ENCODE measurements at regions of chr7 and their contacts with region 1.

Region 1: GRCh38 chr7:28921822-28922221 is 36.3 kb downstream of the TRIL start:
- DNase-seq: peak; percentile 84
- H3K4me3 ChIP-seq: peak overlapping the region in 1 of 2 experiments; percentile 6; a peak in 1 of 4 replicates
- H3K27ac ChIP-seq: peak overlapping the region in 1 of 2 experiments; percentile 93; a peak in 2 of 4 replicates
- H3K4me1 ChIP-seq: peaks cover 0 to 13% of the 10 kb centered on the region in 2 experiments; a peak in 3 of 4 replicates
- H3K27me3 ChIP-seq: 0 out of 2 replicates have a peak, but pooled peaks cover 15% of the 10 kb centered on the region
- CTCF ChIP-seq: peak; percentile 97
- EP300 ChIP-seq: peak in 1 of 2 experiments; percentile 77; a peak in 2 of 4 replicates
- RAD21 ChIP-seq: peak; percentile 87

Region 2: DNA sequence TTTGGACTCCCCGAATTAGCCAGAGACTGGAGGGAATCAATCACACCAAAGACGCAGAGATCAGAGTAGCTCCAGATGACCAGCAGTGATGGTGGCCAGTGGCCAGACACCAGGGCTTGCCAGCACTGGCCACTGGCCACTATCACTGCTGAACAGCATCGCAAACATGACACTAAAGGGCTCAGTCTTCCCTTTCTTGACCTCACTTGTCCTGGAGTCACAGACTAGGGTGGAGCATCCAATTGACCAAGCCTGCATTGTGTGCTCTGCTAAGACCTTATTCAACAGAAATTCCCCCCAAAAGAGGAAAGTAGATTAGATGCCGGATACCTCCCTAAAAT is 274.8 kb before region 1 on chr7:
- CTCF ChIA-PET with region 1: no interaction called
- POLR2A ChIA-PET with region 1: no interaction called
- DNase-seq: no peak
- H3K4me3 ChIP-seq: no peak overlapping the region
- H3K27ac ChIP-seq: no peak overlapping the region
- H3K4me1 ChIP-seq: no peaks in the 10 kb centered on the region
- H3K27me3 ChIP-seq: peaks cover 4% of the 10 kb centered on the region; the same call in 1 of the 2 replicates
- CTCF ChIP-seq: no peak
- EP300 ChIP-seq: no peak
- RAD21 ChIP-seq: no peak

Region 3: DNA sequence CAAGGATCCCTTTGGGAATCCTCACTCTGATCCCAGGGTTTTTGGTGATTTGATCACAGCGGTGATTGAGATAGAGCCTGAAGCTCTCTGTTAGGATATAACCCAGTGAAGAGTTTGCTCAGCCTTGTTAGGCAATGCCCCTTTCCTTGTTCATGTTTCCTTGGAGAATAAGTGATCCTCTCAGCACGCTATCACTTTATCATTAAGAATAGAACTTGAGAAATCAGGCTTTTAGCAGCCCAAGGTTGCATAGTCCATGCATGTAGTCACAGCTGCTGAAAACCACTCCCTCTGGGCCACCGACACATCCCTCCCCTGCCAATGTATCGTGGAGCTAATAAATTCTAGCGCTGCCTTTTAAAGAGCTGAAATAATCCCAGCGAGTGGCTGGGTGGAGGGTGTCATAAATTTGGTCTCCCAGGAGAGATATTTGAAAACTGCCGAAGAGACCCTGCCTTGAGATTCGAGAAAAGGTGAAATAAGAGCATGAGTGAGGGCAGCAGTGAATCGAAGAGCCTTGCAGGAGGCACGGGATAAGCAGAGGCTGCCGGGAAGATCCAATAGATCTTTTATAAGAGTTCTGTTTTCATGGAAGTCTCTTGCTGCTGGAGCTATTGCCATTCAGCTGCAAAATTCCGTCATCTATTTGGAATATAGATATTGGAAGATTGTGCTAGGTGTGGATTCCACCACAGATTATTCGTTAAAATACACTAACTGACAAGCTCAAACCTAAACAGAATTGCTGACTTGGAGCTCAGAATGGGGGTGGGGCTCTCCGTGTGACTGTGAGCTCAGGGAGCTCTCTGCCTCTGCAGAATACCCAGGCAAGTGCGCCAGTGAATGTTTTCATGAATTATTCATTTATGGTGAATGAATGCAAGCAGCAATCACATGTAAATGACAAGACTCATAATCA is 213.5 kb before region 1 on chr7:
- CTCF ChIA-PET with region 1: no interaction called
- POLR2A ChIA-PET with region 1: no interaction called
- DNase-seq: no peak
- H3K4me3 ChIP-seq: no peak overlapping the region
- H3K27ac ChIP-seq: no peak overlapping the region
- H3K4me1 ChIP-seq: peaks cover 0 to 4% of the 10 kb centered on the region in 2 experiments; a peak in 1 of 4 replicates
- H3K27me3 ChIP-seq: no peaks in the 10 kb centered on the region
- CTCF ChIP-seq: no peak
- EP300 ChIP-seq: no peak
- RAD21 ChIP-seq: no peak

Region 4: DNA sequence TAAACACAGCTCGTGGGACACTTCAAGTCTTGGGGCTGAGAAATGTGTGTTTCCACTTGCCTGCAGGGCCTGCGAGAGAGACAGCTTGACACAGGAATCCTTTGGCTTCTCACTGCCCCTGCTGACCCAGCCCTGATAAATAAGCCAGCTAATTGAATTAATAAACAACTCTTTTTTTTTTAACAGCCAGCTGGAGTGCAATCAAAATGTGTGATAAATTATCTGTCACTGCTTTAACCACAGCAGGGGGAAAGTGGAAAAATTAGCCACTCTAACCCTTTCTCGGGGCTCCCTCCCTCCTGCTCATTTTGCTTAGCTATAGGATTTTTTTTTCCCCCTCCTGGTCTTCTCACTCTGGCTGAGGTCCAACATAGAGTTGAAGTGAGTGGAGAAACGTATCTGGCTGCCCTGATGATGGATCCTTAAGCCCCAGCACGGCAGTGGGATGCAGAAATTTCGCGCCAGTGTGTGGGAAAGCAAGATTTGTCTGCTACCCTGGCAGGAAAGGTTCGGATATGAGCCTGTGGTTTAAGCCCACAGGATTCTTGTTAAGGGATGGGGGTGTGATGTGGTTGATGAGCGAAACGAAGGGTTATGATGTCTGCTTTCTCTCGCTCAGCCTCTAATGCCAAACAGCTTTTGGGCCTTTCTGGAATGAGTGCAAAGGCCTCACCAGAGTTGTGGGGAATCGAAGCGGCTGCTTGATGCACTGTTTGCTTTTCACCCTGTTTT is 137.5 kb before region 1 on chr7:
- CTCF ChIA-PET with region 1: no interaction called
- POLR2A ChIA-PET with region 1: no interaction called
- DNase-seq: peak; percentile 49
- H3K4me3 ChIP-seq: no peak overlapping the region
- H3K27ac ChIP-seq: no peak overlapping the region
- H3K4me1 ChIP-seq: peaks cover 0 to 15% of the 10 kb centered on the region in 2 experiments; a peak in 2 of 4 replicates
- H3K27me3 ChIP-seq: no peaks in the 10 kb centered on the region
- CTCF ChIP-seq: no peak
- EP300 ChIP-seq: no peak; a peak in 1 of 4 replicates
- RAD21 ChIP-seq: no peak

Region 5: GRCh38 chr7:28800150-28800549 is 121.7 kb before region 1 on chr7:
- CTCF ChIA-PET with region 1: interaction called, 10 read pairs
- POLR2A ChIA-PET with region 1: no interaction called
- DNase-seq: no peak
- H3K4me3 ChIP-seq: no peak overlapping the region
- H3K27ac ChIP-seq: no peak overlapping the region
- H3K4me1 ChIP-seq: peaks cover 0 to 3% of the 10 kb centered on the region in 2 experiments; a peak in 1 of 4 replicates
- H3K27me3 ChIP-seq: no peaks in the 10 kb centered on the region
- CTCF ChIP-seq: no peak
- EP300 ChIP-seq: no peak
- RAD21 ChIP-seq: no peak

Region 6: DNA sequence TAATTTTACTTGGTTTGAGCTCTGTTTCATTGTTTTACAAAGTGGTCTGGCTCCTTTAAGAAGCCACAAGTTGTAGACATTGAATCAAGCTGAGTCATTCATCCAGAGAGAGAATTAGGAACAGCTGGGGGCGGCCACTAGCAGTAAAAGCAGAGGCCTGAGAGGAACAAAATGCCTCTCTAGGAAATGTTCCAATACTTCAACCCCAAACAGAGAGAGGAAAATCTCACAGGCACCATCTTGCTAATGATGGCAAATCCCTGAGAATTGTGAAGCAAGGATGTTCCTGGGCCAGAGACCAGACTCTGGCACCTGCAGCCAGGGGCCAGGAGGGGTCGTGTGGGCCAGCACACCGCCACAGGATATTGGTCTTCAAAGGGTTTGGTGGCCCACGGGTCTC is 62.8 kb after region 1 on chr7:
- CTCF ChIA-PET with region 1: interaction called, 66 read pairs
- POLR2A ChIA-PET with region 1: no interaction called
- DNase-seq: peak; percentile 42
- H3K4me3 ChIP-seq: no peak overlapping the region; a peak in 1 of 4 replicates
- H3K27ac ChIP-seq: peak overlapping the region; percentile 85 to 97
- H3K4me1 ChIP-seq: peaks cover 26 to 62% of the 10 kb centered on the region in 2 experiments
- H3K27me3 ChIP-seq: no peaks in the 10 kb centered on the region
- CTCF ChIP-seq: no peak
- EP300 ChIP-seq: peak; percentile 58 to 79; a peak in 3 of 4 replicates
- RAD21 ChIP-seq: peak; percentile 21; the same call in 1 of the 2 replicates

Region 7: GRCh38 chr7:29146057-29146706 is 224.4 kb after region 1 on chr7 and contains the start of gene CPVL:
- CTCF ChIA-PET with region 1: interaction called, 17 read pairs
- POLR2A ChIA-PET with region 1: no interaction called
- DNase-seq: peak; percentile 62
- H3K4me3 ChIP-seq: peak within 1 kb of the TSS in 1 of 2 experiments; percentile 31; a peak in 2 of 4 replicates
- H3K27ac ChIP-seq: no peak within 1 kb of the TSS
- H3K4me1 ChIP-seq: peaks cover 0 to 11% of the 10 kb centered on the region in 2 experiments; a peak in 1 of 4 replicates
- H3K27me3 ChIP-seq: peaks cover 27% of the 10 kb centered on the region
- CTCF ChIP-seq: no peak
- EP300 ChIP-seq: no peak
- RAD21 ChIP-seq: no peak
- polyA plus RNA-seq, gene CPVL: 0.16 TPM in 1 of 2 replicates, not detected in the other

Region 8: GRCh38 chr7:29319719-29320521 is 398.1 kb after region 1 on chr7:
- CTCF ChIA-PET with region 1: interaction called, 14 read pairs
- POLR2A ChIA-PET with region 1: no interaction called
- DNase-seq: peak; percentile 73
- H3K4me3 ChIP-seq: peak overlapping the region in 1 of 2 experiments; percentile 9; a peak in 1 of 4 replicates
- H3K27ac ChIP-seq: peak overlapping the region in 1 of 2 experiments; percentile 99; a peak in 3 of 4 replicates
- H3K4me1 ChIP-seq: peaks cover 10 to 38% of the 10 kb centered on the region in 2 experiments; a peak in 3 of 4 replicates
- H3K27me3 ChIP-seq: no peaks in the 10 kb centered on the region
- CTCF ChIP-seq: no peak
- EP300 ChIP-seq: peak in 1 of 2 experiments; percentile 84; a peak in 2 of 4 replicates
- RAD21 ChIP-seq: peak; percentile 29

Region 9: GRCh38 chr7:29401769-29402168 is 479.9 kb after region 1 on chr7:
- CTCF ChIA-PET with region 1: interaction called, 372 read pairs
- POLR2A ChIA-PET with region 1: no interaction called
- DNase-seq: no peak
- H3K4me3 ChIP-seq: no peak overlapping the region
- H3K27ac ChIP-seq: no peak overlapping the region
- H3K4me1 ChIP-seq: no peaks in the 10 kb centered on the region; a peak in 1 of 4 replicates
- H3K27me3 ChIP-seq: peaks cover 11% of the 10 kb centered on the region; the same call in 1 of the 2 replicates
- CTCF ChIP-seq: no peak
- EP300 ChIP-seq: no peak
- RAD21 ChIP-seq: no peak

Region 10: DNA sequence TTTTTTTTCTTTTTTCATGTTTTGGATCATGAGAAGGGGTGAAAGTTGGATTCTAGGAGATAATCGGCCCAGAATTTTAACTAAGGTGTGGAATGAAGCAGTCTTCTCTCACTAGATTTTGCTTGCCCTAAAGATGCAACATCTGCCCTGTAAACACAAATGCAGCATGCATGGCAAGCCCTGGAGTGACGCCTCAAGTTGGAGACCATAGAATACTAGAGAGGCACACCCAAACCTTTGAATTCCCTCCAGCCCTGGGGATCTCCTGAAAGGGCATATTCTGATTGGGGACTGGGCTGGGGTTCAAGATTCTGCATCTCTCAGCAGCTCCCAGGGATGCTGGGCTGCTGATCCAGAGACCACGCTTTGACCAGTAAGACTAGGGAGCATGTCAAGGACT is 514.1 kb after region 1 on chr7:
- CTCF ChIA-PET with region 1: no interaction called
- POLR2A ChIA-PET with region 1: no interaction called
- DNase-seq: no peak
- H3K4me3 ChIP-seq: no peak overlapping the region
- H3K27ac ChIP-seq: no peak overlapping the region
- H3K4me1 ChIP-seq: no peaks in the 10 kb centered on the region
- H3K27me3 ChIP-seq: no peaks in the 10 kb centered on the region
- CTCF ChIP-seq: no peak
- EP300 ChIP-seq: no peak
- RAD21 ChIP-seq: no peak

Measured in SK-N-SH (cell line).